Gastrocnemius medialis (tissue), 4 donors: ENCODE measurements at regions of chr4 and their contacts with region 1.

Region 1: GRCh38 chr4:145097821-145098674 is at the starts of genes ABCE1 and ANAPC10:
- DNase-seq: peak; percentile 93 to 95
- ATAC-seq: peak; percentile 94 to 96
- H3K4me3 ChIP-seq: peak within 1 kb of the TSS; percentile 83 to 90 (median 86)
- H3K27ac ChIP-seq: peak within 1 kb of the TSS; percentile 91 to 96 (median 94)
- H3K4me1 ChIP-seq: peaks cover 33 to 43% of the 10 kb centered on the region in 2 donors
- H3K27me3 ChIP-seq: no peaks in the 10 kb centered on the region
- CTCF ChIP-seq: peak in 2 of 5 experiments; percentile 5 to 35
- POLR2A ChIP-seq: peak; percentile 55 to 57
- total RNA-seq, gene ABCE1: 42.9 to 79.3 (median 62.5) TPM
- total RNA-seq, gene ANAPC10: 17.7 to 33.6 (median 24.9) TPM

Region 2: GRCh38 chr4:143513306-143514168 is 1584.5 kb before region 1 on chr4 and contains the start of gene SMARCA5:
- in situ Hi-C with region 1: no loop called
- intact Hi-C with region 1: loop called (anchors 10 kb)
- DNase-seq: peak; percentile 95 to 97
- ATAC-seq: peak; percentile 92 to 95
- H3K4me3 ChIP-seq: peak within 1 kb of the TSS; percentile 77 to 92 (median 86)
- H3K27ac ChIP-seq: peak within 1 kb of the TSS; percentile 91 to 96 (median 94)
- H3K4me1 ChIP-seq: peaks cover 38 to 44% of the 10 kb centered on the region in 2 donors
- H3K27me3 ChIP-seq: no peaks in the 10 kb centered on the region
- CTCF ChIP-seq: no peak
- POLR2A ChIP-seq: peak; percentile 89 to 95
- total RNA-seq, gene SMARCA5: 19.7 to 27.8 (median 26.7) TPM

Region 3: DNA sequence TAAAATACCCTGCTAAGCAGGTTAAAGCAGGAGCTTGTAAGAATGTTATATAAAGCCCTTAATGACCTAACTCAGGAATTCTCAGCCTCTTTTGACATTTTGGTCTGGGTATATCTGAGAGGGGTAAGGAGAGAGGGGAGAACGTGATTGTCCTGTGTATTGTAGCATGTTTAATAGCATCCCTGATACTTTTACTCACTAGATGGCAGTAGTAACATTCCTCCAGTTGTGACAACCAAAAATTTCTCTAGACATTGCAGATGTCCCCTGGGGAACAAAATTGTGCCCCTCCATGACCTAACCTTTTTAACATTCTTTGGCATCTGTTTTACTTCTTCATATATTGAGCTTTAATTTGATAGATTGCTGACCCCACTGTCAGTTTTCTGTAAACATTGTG is 1566.7 kb before region 1 on chr4:
- in situ Hi-C with region 1: loop called in 1 of 4 experiments (anchors 25 kb)
- intact Hi-C with region 1: no loop called
- DNase-seq: no peak
- ATAC-seq: no peak
- H3K4me3 ChIP-seq: no peak overlapping the region
- H3K27ac ChIP-seq: no peak overlapping the region
- H3K4me1 ChIP-seq: no peaks in the 10 kb centered on the region
- H3K27me3 ChIP-seq: no peaks in the 10 kb centered on the region
- CTCF ChIP-seq: no peak
- POLR2A ChIP-seq: no peak

Region 4: GRCh38 chr4:144174401-144175067 is 923.5 kb before region 1 on chr4:
- in situ Hi-C with region 1: no loop called
- intact Hi-C with region 1: loop called (anchors 10 kb)
- DNase-seq: no peak
- ATAC-seq: peak in 1 of 2 donors; percentile 50
- H3K4me3 ChIP-seq: no peak overlapping the region
- H3K27ac ChIP-seq: no peak overlapping the region
- H3K4me1 ChIP-seq: no peaks in the 10 kb centered on the region
- H3K27me3 ChIP-seq: no peaks in the 10 kb centered on the region
- CTCF ChIP-seq: peak in 4 of 5 experiments; percentile 20 to 40 (median 30)
- POLR2A ChIP-seq: no peak

Region 5: DNA sequence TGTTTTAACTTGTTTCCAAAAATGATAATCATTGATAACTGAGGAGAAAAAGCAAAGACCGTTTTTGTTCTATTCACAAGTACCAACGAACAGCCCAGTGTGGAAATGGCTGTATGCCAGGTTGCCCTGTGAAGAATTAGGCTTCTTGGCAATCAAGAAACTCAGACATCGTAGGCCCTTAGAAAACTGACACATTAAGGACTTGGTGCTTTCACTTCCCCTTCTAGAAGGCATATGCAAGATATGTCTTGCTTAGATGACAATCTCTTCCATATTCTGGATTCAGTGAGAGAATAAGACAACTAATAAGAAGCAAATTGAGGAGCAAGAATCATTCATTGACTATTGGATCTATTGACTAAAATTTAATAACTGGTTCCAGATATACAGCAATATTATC is 56.7 kb before region 1 on chr4:
- in situ Hi-C with region 1: no loop called
- intact Hi-C with region 1: no loop called
- DNase-seq: peak in 1 of 2 donors; percentile 8
- ATAC-seq: no peak
- H3K4me3 ChIP-seq: no peak overlapping the region
- H3K27ac ChIP-seq: no peak overlapping the region
- H3K4me1 ChIP-seq: peaks cover 0 to 6% of the 10 kb centered on the region in 2 donors
- H3K27me3 ChIP-seq: no peaks in the 10 kb centered on the region
- CTCF ChIP-seq: no peak
- POLR2A ChIP-seq: no peak

Region 6: DNA sequence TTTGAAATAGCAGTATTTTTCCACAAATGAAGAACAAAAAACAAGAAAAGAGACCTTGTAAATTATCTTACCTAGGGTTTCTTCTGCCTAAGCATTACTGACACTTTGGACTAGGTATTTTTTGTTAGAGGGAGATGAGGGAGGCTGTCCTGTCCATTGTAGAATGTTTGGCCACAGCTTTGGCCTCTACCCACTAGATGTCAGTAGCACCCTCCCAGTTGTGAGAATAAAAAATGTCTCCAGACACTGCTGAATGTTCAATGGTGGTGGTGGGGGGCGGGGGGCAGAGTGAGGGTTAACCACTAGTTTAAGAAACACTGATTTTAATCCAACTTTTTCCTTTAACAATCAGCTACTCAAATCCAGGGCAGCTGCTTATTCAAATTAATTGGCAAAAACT is 56.5 kb after region 1 on chr4:
- in situ Hi-C with region 1: loop called in 1 of 4 experiments (anchors 10 kb)
- intact Hi-C with region 1: no loop called
- DNase-seq: no peak
- ATAC-seq: peak; percentile 66 to 82
- H3K4me3 ChIP-seq: no peak overlapping the region
- H3K27ac ChIP-seq: peak overlapping the region; percentile 65 to 73 (median 68)
- H3K4me1 ChIP-seq: peaks cover 13 to 22% of the 10 kb centered on the region in 2 donors
- H3K27me3 ChIP-seq: no peaks in the 10 kb centered on the region
- CTCF ChIP-seq: peak; percentile 25 to 70 (median 36)
- POLR2A ChIP-seq: no peak

Region 7: GRCh38 chr4:145180298-145181090 is 82.4 kb after region 1 on chr4 and contains the start of gene OTUD4:
- in situ Hi-C with region 1: no loop called
- intact Hi-C with region 1: loop called (anchors 2 kb)
- DNase-seq: peak; percentile 94 to 96
- ATAC-seq: peak; percentile 71 to 76
- H3K4me3 ChIP-seq: peak within 1 kb of the TSS; percentile 63 to 95 (median 87)
- H3K27ac ChIP-seq: peak within 1 kb of the TSS; percentile 97 to 99 (median 98)
- H3K4me1 ChIP-seq: peaks cover 26 to 43% of the 10 kb centered on the region in 2 donors
- H3K27me3 ChIP-seq: no peaks in the 10 kb centered on the region
- CTCF ChIP-seq: peak in 3 of 5 experiments; percentile 15 to 23 (median 18)
- POLR2A ChIP-seq: peak; percentile 86 to 87
- total RNA-seq, gene OTUD4: 32.6 to 61.1 (median 47.9) TPM